Endothelial cell of umbilical vein (primary cell): ENCODE measurements at regions of chr17 and their contacts with region 1.

Region 1: GRCh38 chr17:69523244-69523861 is 108.9 kb downstream of the MAP2K6 start:
- DNase-seq: peak; percentile 76
- H3K4me3 ChIP-seq: no peak overlapping the region
- H3K27ac ChIP-seq: no peak overlapping the region
- H3K4me1 ChIP-seq: peaks cover 14% of the 10 kb centered on the region
- H3K27me3 ChIP-seq: no peaks in the 10 kb centered on the region
- CTCF ChIP-seq: peak; percentile 68 to 74
- POLR2A ChIP-seq: no peak

Region 2: GRCh38 chr17:69130627-69131296 is 392.6 kb before region 1 on chr17:
- CTCF ChIA-PET with region 1: no interaction called
- POLR2A ChIA-PET with region 1: no interaction called
- dilution Hi-C with region 1: no loop called
- intact Hi-C with region 1: no loop called
- DNase-seq: no peak
- H3K4me3 ChIP-seq: no peak overlapping the region
- H3K27ac ChIP-seq: no peak overlapping the region
- H3K4me1 ChIP-seq: no peaks in the 10 kb centered on the region
- H3K27me3 ChIP-seq: no peaks in the 10 kb centered on the region
- CTCF ChIP-seq: no peak
- POLR2A ChIP-seq: no peak

Region 3: GRCh38 chr17:69335058-69335457 is 188.3 kb before region 1 on chr17:
- CTCF ChIA-PET with region 1: interaction called, 190 read pairs
- POLR2A ChIA-PET with region 1: no interaction called
- dilution Hi-C with region 1: no loop called
- intact Hi-C with region 1: loop called (anchors 1 kb)
- DNase-seq: peak; percentile 46
- H3K4me3 ChIP-seq: no peak overlapping the region
- H3K27ac ChIP-seq: no peak overlapping the region
- H3K4me1 ChIP-seq: no peaks in the 10 kb centered on the region
- H3K27me3 ChIP-seq: no peaks in the 10 kb centered on the region
- CTCF ChIP-seq: peak in 1 of 2 donors; percentile 30
- POLR2A ChIP-seq: no peak

Region 4: DNA sequence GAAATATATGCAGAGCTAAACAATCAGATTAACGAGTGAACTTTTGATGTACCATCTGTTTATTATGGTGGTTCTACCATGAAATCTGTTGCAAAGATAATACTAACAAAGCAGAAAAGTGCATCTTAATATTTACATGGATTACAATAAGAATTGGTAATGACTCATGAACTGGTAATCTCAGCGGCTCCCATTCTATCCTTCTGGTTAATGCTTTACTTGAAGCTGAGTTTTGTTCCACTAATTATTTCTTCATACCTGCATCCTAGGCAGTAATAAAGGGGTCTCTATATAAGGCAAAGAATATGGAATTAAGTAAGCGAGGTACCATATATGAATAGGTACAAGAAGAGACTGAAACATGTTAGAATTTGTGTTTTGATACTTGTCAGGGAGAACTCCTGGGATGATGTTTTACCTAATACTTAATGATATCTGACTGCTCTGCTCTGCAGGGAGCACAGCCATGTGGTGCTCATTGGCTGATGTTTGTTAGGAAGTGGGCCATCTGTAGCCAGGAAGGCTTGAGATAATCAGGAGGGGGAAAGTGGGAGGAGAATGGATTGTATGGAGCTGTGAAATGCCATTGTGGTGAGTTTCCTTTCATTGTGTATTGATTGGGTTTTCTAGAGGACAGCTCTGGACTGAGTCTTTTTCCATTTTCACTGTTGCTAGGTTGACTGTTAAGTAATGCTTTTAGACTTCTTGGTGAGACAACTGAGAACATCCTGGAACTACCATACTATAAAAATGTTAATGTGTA is 56.3 kb before region 1 on chr17:
- CTCF ChIA-PET with region 1: interaction called, 3 read pairs
- POLR2A ChIA-PET with region 1: no interaction called
- dilution Hi-C with region 1: no loop called
- intact Hi-C with region 1: loop called (anchors 2 kb)
- DNase-seq: peak; percentile 92
- H3K4me3 ChIP-seq: no peak overlapping the region
- H3K27ac ChIP-seq: peak overlapping the region; percentile 65
- H3K4me1 ChIP-seq: peaks cover 20% of the 10 kb centered on the region
- H3K27me3 ChIP-seq: no peaks in the 10 kb centered on the region
- CTCF ChIP-seq: no peak
- POLR2A ChIP-seq: no peak

Region 5: GRCh38 chr17:69567130-69567529 is 43.8 kb after region 1 on chr17:
- CTCF ChIA-PET with region 1: interaction called, 30 read pairs
- POLR2A ChIA-PET with region 1: no interaction called
- dilution Hi-C with region 1: no loop called
- intact Hi-C with region 1: loop called (anchors 1 kb)
- DNase-seq: no peak
- H3K4me3 ChIP-seq: no peak overlapping the region
- H3K27ac ChIP-seq: no peak overlapping the region
- H3K4me1 ChIP-seq: no peaks in the 10 kb centered on the region
- H3K27me3 ChIP-seq: peaks cover 0 to 4% of the 10 kb centered on the region in 2 experiments
- CTCF ChIP-seq: no peak
- POLR2A ChIP-seq: no peak

Region 6: DNA sequence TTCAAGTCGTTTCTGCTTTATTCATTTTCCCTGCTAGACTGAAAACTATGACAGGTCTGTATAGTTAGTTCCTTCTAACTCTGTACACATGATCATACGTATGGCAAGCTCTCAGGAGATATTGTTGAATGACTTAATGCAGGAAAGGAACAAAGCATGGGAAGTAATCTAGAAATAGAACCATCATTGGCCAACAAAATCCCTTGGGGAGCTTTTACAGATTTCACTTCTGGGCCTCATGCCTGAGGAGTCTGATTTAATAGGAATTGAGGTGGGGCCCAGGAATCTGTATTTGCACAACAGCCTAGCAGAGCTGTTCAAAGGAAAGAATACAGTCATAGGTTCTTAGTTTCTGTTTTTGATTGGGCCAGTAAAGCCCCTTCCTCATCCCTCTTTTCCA is 120.3 kb after region 1 on chr17:
- CTCF ChIA-PET with region 1: no interaction called
- POLR2A ChIA-PET with region 1: no interaction called
- dilution Hi-C with region 1: no loop called
- intact Hi-C with region 1: no loop called
- DNase-seq: no peak
- H3K4me3 ChIP-seq: no peak overlapping the region
- H3K27ac ChIP-seq: no peak overlapping the region
- H3K4me1 ChIP-seq: peaks cover 4% of the 10 kb centered on the region
- H3K27me3 ChIP-seq: no peaks in the 10 kb centered on the region
- CTCF ChIP-seq: no peak
- POLR2A ChIP-seq: no peak

Region 7: GRCh38 chr17:70552230-70552981 is 1029.1 kb after region 1 on chr17:
- CTCF ChIA-PET with region 1: interaction called, 33 read pairs
- POLR2A ChIA-PET with region 1: no interaction called
- dilution Hi-C with region 1: no loop called
- intact Hi-C with region 1: loop called (anchors 5 kb)
- DNase-seq: peak; percentile 75
- H3K4me3 ChIP-seq: no peak overlapping the region
- H3K27ac ChIP-seq: no peak overlapping the region
- H3K4me1 ChIP-seq: no peaks in the 10 kb centered on the region
- H3K27me3 ChIP-seq: no peaks in the 10 kb centered on the region
- CTCF ChIP-seq: peak; percentile 12 to 24
- POLR2A ChIP-seq: no peak